WTC11 (cell line): ENCODE measurements at regions of chr11 and their contacts with region 1.

Region 1: DNA sequence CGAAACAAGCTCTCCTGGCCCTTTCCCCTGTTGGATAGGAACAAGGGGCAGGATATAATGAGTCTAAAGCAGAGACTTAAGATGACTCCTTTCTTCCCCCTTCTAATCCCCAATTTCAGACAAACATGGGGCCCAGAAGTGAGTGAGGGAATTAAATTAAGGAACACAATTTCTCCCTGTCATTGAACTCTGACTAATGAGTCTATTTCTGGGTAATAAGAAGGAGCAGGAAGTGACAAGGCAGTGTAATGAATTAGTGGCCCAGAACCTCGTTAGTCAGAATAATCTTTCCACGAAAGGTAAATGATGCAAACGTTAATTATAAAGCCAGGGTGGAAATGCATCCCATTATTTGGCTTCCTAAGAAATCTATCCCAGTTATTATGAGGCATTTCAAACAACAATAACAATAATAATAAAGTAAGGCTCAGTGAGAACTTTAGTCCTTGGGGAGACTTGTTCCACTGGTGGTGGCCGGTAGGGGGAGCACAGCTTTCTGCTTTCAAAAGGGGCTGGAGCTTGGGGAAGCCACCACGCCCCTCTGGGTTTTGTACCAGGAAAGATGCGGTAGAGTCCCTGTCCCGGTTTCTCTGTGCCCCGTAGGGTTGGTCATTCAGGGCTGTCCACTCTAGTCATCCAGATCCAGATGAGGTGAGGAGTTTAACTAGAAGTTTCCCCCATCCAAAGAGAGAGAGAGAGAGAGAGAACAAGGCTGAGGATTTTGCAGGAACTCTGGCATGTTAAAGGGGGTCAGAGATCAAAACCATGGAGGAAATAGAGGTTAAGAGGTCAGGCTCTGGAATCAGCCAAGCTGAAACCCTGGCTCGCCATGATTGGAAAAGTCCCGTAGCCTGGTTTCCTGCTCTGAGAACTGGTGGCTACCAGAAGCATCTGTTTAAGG is 298.3 kb downstream of the NTM start:
- DNase-seq: peak; percentile 84
- ATAC-seq: peak; percentile 68
- H3K4me3 Mint-ChIP-seq: no peak overlapping the region
- H3K27ac Mint-ChIP-seq: no peak overlapping the region
- H3K4me1 Mint-ChIP-seq: peaks cover 15% of the 10 kb centered on the region
- H3K27me3 Mint-ChIP-seq: no peaks in the 10 kb centered on the region; the same call in 1 of the 2 replicates
- CTCF ChIP-seq: peak; percentile 72; the same call in 1 of the 2 replicates

Region 2: DNA sequence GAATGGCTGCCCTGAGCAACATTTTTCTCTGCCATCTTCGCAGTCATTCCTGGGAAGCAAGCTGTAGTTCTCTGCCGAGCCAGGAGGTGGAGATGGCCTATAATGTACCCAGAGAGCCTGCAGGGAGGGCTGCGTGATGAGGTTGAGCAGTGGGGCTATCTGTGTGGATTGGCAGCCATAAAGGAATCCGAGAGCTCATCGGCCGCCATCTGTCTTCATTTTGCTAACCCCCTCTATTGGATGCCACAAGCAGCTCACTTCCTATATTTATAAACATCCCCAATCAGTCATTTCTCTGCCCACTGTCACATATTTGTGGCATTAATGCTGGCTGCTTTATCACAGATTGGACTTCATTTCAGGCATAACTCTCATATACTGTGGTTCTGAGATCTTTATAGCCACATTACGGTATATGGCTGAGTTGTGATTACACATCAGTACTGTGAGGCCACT is 88.8 kb before region 1 on chr11:
- CTCF ChIA-PET with region 1: interaction called, 114 read pairs
- POLR2A ChIA-PET with region 1: no interaction called
- DNase-seq: peak; percentile 70
- ATAC-seq: peak; percentile 97
- H3K4me3 Mint-ChIP-seq: no peak overlapping the region
- H3K27ac Mint-ChIP-seq: no peak overlapping the region
- H3K4me1 Mint-ChIP-seq: peaks cover 40% of the 10 kb centered on the region
- H3K27me3 Mint-ChIP-seq: no peaks in the 10 kb centered on the region
- CTCF ChIP-seq: peak; percentile 68

Region 3: GRCh38 chr11:131609337-131609736 is 59.4 kb before region 1 on chr11:
- CTCF ChIA-PET with region 1: interaction called, 17 read pairs
- POLR2A ChIA-PET with region 1: interaction called, 8 read pairs
- DNase-seq: no peak
- ATAC-seq: no peak; the same call in 1 of the 2 replicates
- H3K4me3 Mint-ChIP-seq: no peak overlapping the region
- H3K27ac Mint-ChIP-seq: no peak overlapping the region
- H3K4me1 Mint-ChIP-seq: peaks cover 30% of the 10 kb centered on the region
- H3K27me3 Mint-ChIP-seq: peaks cover 40% of the 10 kb centered on the region
- CTCF ChIP-seq: no peak

Region 4: DNA sequence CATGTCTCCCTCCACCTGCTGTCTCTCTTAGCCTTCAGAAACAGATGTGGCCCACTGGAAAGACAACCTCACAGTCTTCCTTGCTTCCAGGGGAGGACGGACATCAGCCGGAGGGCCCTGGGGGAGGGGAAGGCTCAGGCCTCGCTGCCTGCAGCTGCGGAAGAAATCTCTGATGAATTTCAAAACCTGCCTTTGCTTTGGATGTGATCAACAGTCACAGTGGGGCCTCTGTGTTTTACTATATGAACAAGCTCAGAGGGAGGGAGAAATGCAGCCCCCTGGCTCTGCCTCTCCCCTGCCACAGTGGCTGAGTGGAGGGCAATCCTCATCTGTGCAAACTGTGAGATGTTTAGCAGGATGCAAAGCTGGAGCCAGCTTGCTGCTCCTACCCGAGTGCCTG is 15.5 kb before region 1 on chr11:
- CTCF ChIA-PET with region 1: interaction called, 69 read pairs
- POLR2A ChIA-PET with region 1: interaction called, 3 read pairs
- DNase-seq: no peak
- ATAC-seq: no peak
- H3K4me3 Mint-ChIP-seq: no peak overlapping the region
- H3K27ac Mint-ChIP-seq: 0 out of 2 replicates have a peak overlapping the region, but pooled peaks have one; percentile 52
- H3K4me1 Mint-ChIP-seq: peaks cover 65% of the 10 kb centered on the region
- H3K27me3 Mint-ChIP-seq: no peaks in the 10 kb centered on the region; the same call in 1 of the 2 replicates
- CTCF ChIP-seq: no peak